ENCODE measurements at regions of chr4 and their contacts with region 1.

Region 1: GRCh38 chr4:6264225-6264540 is 5.5 kb upstream of the WFS1 start:
- DNase-seq: peak; percentile 62
- ATAC-seq: peak; percentile 58 to 74
- H3K4me3 ChIP-seq: no peak overlapping the region
- H3K27ac ChIP-seq: no peak overlapping the region
- H3K4me1 ChIP-seq: peaks cover 15% of the 10 kb centered on the region
- H3K27me3 ChIP-seq: no peaks in the 10 kb centered on the region
- CTCF ChIP-seq: peak; percentile 65

Region 2: DNA sequence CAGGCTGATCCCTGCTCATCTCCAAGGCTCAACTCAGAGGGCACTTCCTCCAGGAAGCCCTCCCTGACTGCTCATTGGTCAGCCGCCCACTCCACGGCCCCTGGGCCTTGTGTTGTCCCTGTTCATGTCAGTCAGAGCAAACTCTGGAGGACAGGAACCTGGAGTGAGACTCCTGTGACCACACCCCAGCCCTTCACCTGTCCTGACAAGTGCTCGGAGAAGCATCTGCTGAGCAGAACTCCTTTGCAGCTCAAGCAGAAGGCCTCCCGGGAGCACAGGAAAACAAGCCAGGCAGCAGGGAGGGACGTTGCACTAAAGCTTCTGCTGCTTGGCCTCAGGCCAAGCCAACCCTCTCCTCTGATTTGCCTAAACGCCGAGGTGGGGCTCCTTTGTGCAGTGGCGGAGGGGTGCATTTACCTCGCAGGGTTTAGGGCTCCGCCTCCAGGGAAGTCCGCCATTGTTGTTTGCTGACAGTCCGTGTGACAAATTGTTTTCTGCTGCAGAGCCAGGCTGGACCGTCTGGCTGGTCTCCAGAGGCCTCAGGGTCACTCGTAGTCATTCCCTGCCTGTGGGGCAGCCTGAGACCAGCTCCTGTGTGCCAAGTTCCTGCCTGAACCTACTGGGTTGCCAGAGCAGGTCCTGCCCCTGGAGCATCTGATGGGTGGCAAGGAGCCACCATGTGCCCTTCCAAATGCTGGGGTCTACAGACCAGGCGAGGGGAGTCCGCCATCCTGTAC is 307.7 kb before region 1 on chr4:
- intact Hi-C with region 1: no loop called
- DNase-seq: no peak
- ATAC-seq: peak; percentile 17 to 42
- H3K4me3 ChIP-seq: no peak overlapping the region
- H3K27ac ChIP-seq: no peak overlapping the region
- H3K4me1 ChIP-seq: peaks cover 5% of the 10 kb centered on the region
- H3K27me3 ChIP-seq: peaks cover 13% of the 10 kb centered on the region
- CTCF ChIP-seq: no peak

Region 3: DNA sequence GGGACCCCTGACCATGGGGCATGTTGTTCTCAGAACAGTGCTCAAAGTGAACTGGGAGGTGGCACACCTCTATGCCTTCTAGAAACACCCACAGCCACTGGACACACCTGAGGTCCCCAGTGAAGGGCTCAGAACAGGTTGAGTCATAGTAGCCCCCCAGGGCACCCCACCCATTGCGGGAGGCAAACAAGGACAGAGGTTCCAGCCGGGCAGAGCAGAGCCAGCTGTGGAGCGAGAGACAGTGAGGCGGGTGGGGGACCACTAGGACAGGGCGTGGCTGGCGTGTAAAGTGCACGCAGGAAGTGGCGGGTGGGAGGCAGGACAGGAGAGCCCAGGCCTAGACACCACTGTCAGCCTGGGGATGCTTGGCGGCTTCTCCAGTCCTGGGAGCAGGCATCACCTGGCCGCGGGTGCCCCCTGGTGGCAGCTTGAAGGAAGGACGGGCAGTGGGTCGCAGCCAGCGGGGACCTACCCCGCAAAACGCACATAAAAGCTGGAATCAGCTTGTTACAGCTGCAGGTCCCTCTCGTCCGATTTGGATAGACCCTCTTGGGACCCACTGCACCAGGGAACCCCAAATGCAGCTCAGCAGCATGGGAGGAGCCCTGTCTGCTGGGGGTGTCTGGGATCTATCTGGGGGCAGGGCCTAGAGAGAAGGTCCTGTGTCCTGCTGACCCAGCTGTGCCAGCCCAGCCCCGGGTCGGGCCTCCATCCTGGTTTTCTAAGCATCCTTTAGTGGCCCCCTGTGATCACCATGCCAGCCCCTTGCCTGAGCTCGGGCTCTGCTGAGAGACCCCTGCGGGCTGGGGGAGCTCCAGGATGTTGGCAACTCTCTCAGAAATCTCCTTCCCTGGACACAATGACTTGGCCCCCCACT is 63.1 kb after region 1 on chr4:
- intact Hi-C with region 1: loop called (anchors 5 kb)
- DNase-seq: peak; percentile 86
- ATAC-seq: peak; percentile 79 to 84
- H3K4me3 ChIP-seq: no peak overlapping the region
- H3K27ac ChIP-seq: no peak overlapping the region
- H3K4me1 ChIP-seq: peaks cover 25% of the 10 kb centered on the region
- H3K27me3 ChIP-seq: peaks cover 3% of the 10 kb centered on the region
- CTCF ChIP-seq: peak; percentile 98